Left colon (tissue), 2 donors: ENCODE measurements at regions of chrX and their contacts with region 1.

Region 1: GRCh38 chrX:122421434-122422121 is 762.5 kb upstream of the GRIA3 start:
- DNase-seq: no peak
- ATAC-seq: no peak

Region 2: DNA sequence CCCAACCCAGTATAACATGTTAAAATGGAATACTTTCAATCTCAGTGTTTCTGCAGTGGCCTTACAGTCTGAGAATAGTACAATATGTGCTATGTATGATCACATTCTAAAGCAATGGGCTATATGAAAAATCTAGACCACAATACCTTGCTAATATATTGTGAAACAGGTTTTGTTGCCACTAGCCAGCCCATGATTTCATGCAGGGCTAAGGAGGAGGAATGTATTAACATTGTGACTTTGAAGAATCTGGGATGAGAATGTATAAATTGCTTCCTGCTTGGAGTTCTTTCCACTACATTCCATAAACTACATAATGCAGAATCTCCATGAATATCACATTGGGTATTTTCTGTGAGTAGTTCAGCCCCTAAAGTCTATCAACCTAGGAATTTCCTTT is 172.9 kb before region 1 on chrX:
- intact Hi-C with region 1: no loop called
- DNase-seq: no peak
- ATAC-seq: no peak

Region 3: GRCh38 chrX:122363112-122363984 is 58.2 kb before region 1 on chrX:
- intact Hi-C with region 1: loop called in 1 of 2 experiments (anchors 10 kb)
- DNase-seq: no peak
- ATAC-seq: no peak